Heart right ventricle (tissue), 16 donors: ENCODE measurements at regions of chr9 and their contacts with region 1.

Region 1: DNA sequence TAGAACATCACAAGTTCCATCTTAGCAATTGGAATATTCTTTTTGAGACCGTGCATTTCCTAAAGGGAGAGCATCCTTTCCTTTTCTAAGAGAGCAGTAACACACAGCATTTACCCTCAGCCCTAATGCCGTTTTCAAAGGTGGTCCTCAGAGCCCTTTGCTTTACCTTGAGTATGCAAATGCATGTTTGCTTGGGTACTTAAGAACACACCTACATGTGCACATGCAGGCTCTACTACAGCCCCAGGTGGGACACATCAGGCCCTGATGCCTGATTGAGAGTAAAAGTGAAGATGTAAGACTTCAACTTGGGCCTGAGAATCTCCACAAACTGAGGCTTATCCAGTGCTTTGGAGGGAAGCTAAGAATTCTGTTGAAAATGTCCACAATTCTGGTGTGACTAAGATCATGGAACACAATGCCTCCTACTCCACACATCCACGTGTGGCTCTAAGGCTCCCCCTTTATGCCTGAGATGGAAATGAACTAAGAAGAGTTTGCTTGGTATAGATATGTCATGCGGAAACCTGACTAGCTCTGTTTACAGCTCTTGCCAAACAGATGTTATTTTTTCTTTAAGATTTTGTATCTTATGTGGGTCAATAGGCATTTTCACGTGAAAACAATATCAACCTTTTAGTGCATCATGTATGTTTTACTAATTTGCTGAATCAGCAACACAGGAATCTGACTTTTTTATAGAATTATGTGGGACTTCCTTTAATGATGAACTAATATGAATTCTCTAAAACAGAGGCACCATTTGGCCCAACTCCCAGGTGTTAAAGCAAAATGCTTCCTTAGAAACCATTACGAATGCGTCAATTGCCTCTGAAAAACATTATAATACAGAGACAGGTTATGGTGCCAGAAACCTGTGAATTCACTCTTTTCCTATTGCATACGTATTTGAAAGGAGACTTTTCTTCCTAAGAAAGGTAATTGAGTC is 48.9 kb upstream of the SLC2A8 start:
- DNase-seq: peak in 1 of 2 donors; percentile 24
- ATAC-seq: peak in 5 of 8 donors; percentile 49 to 78 (median 76)
- H3K4me3 ChIP-seq: no peak overlapping the region
- H3K27ac ChIP-seq: peak overlapping the region in 2 of 10 donors; percentile 38 to 51
- H3K4me1 ChIP-seq: peaks cover 0 to 68% (median 12%) of the 10 kb centered on the region in 9 donors
- H3K27me3 ChIP-seq: no peaks in the 10 kb centered on the region
- CTCF ChIP-seq: peak in 8 of 9 donors; percentile 43 to 78 (median 56)

Region 2: DNA sequence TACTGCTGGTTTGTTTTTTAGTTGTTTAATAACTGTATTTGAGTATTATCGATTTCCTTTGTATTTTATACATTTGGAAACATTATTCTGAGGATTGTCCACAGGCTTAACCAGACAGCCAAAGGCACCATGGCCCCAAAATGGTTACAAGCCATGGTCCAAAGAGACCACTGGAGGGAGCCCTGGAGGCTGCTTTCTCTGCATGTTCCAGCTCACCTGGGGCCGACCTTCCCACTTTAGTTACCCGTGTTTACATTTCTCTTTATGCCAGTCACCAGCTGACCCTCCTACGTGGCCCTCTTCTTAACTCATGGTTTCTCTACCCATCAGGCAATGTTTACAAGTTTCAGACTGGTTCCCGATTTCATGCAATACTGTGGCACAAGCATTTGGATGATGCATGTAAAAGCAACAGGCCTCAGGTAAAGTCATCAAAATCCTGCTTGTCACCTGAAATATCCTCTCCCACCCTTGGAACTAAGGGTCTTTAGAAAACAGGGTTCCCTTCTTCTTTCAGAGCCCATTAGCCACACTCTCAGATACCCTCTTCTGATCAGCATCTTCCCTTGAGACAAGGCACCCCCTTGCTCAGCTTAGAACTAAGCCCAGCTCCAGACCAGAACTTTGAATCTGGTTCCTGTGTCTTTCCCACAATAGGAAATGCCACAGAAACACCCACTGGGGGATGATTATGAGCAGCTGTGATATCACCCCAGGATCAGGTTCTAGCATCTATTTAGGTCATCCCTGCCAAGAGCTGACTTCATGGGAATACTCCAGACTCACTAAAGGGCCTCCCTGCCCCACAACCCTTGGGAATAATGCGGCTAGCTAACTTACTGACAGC is 133.5 kb before region 1 on chr9:
- intact Hi-C with region 1: loop called in 4 of 10 experiments (anchors 5 to 10 kb)
- DNase-seq: peak in 1 of 2 donors; percentile 52
- ATAC-seq: peak in 6 of 8 donors; percentile 9 to 61 (median 46)
- H3K4me3 ChIP-seq: no peak overlapping the region
- H3K27ac ChIP-seq: no peak overlapping the region
- H3K4me1 ChIP-seq: peaks cover 0 to 11% (median 0%) of the 10 kb centered on the region in 9 donors
- H3K27me3 ChIP-seq: no peaks in the 10 kb centered on the region
- CTCF ChIP-seq: peak; percentile 56 to 80 (median 76)

Region 3: GRCh38 chr9:127244609-127245601 is 103.2 kb before region 1 on chr9:
- intact Hi-C with region 1: loop called in 1 of 10 experiments (anchors 10 kb)
- DNase-seq: peak; percentile 97 to 98
- ATAC-seq: peak; percentile 99 to 100 (median 100)
- H3K4me3 ChIP-seq: peak overlapping the region; percentile 42 to 71 (median 60)
- H3K27ac ChIP-seq: peak overlapping the region in 9 of 10 donors; percentile 65 to 87 (median 81)
- H3K4me1 ChIP-seq: peaks cover 0 to 22% (median 8%) of the 10 kb centered on the region in 9 donors
- H3K27me3 ChIP-seq: no peaks in the 10 kb centered on the region
- CTCF ChIP-seq: peak in 1 of 9 donors; percentile 11

Region 4: GRCh38 chr9:127311239-127311741 is 36.8 kb before region 1 on chr9:
- intact Hi-C with region 1: loop called in 4 of 10 experiments (anchors 2 to 5 kb)
- DNase-seq: peak in 1 of 2 donors; percentile 58
- ATAC-seq: peak in 6 of 8 donors; percentile 8 to 64 (median 57)
- H3K4me3 ChIP-seq: no peak overlapping the region
- H3K27ac ChIP-seq: peak overlapping the region; percentile 8 to 83 (median 58)
- H3K4me1 ChIP-seq: peaks cover 0 to 64% (median 36%) of the 10 kb centered on the region in 9 donors
- H3K27me3 ChIP-seq: no peaks in the 10 kb centered on the region
- CTCF ChIP-seq: peak; percentile 45 to 71 (median 61)